ENCODE measurements at regions of chr6 and their contacts with region 1.

Region 1: DNA sequence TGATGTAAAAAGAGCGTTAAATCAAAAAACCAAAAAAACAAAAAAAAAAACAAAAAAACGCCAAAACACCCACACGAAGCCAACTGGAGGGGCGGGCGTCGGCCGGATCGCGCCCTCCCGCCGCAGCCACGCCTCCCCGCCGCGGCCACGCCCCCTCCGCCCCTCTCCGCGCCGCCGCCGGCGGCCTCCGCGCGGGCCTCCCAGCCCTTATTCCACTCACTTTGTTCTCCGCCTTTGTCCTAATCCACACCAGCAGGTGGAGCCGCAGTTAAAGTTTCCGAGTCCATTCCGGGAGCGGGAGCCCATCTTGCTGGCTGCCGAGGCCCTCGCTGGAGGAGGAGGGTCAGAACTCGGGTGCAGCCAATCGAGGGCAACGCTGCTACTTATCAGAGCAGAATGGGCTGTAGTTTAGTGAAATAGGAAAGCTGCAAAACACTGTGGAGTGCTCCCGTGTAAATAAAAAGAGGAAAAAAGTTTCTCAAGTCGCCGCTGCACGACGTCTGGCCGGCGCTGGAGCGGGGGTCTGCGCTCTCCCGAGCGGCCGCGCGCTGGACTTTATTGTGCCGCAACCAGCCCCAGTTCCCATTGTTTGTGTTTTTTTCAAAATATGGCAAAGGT is at the start of gene ASF1A:
- DNase-seq: peak; percentile 97
- H3K4me3 Mint-ChIP-seq: peak within 1 kb of the TSS; percentile 79
- H3K27ac Mint-ChIP-seq: peak within 1 kb of the TSS; percentile 95
- H3K4me1 Mint-ChIP-seq: peaks cover 51% of the 10 kb centered on the region
- H3K27me3 Mint-ChIP-seq: no peaks in the 10 kb centered on the region
- total RNA-seq, gene ASF1A: 55.7 to 59.8 TPM

Region 2: GRCh38 chr6:118651282-118652050 is 242.4 kb before region 1 on chr6 and contains the start of gene CEP85L:
- CTCF ChIA-PET with region 1: interaction called, 3 read pairs
- POLR2A ChIA-PET with region 1: interaction called, 23 read pairs
- DNase-seq: peak; percentile 90
- H3K4me3 Mint-ChIP-seq: peak within 1 kb of the TSS; percentile 82
- H3K27ac Mint-ChIP-seq: peak within 1 kb of the TSS; percentile 75
- H3K4me1 Mint-ChIP-seq: peaks cover 34% of the 10 kb centered on the region
- H3K27me3 Mint-ChIP-seq: no peaks in the 10 kb centered on the region
- total RNA-seq, gene CEP85L: 36.2 to 38.0 TPM

Region 3: DNA sequence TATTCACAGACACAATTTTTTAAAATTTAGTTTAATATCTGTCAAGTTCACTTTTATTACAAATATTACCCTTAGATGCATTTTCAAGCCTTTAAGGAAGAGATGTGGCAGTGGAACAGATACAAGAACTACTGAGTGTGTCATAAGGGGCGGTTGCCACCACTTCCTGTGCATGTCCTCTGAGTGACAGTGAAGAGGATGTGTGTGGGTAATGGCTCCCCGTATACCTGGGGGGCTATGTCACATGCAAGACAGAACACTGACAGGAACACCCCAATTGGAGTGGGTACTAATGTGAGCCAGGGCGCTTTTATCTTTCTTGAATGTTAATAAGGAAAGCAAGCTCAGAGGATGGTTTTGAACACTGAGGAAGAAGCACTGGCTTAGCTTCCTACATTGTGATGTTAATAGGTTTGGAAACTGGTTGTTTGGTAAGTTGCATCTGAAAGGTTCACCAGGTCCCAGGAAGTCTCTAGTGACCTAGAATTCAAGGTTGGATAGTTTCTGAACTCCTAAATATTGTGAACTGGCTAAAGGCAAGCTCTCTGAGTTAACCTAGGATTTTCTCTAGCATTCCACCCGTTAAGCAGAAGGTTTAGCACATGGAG is 83.4 kb before region 1 on chr6:
- CTCF ChIA-PET with region 1: interaction called, 35 read pairs
- POLR2A ChIA-PET with region 1: interaction called, 74 read pairs
- DNase-seq: peak; percentile 83
- H3K4me3 Mint-ChIP-seq: peak overlapping the region; percentile 3
- H3K27ac Mint-ChIP-seq: peak overlapping the region; percentile 84
- H3K4me1 Mint-ChIP-seq: peaks cover 60% of the 10 kb centered on the region
- H3K27me3 Mint-ChIP-seq: no peaks in the 10 kb centered on the region

Region 4: DNA sequence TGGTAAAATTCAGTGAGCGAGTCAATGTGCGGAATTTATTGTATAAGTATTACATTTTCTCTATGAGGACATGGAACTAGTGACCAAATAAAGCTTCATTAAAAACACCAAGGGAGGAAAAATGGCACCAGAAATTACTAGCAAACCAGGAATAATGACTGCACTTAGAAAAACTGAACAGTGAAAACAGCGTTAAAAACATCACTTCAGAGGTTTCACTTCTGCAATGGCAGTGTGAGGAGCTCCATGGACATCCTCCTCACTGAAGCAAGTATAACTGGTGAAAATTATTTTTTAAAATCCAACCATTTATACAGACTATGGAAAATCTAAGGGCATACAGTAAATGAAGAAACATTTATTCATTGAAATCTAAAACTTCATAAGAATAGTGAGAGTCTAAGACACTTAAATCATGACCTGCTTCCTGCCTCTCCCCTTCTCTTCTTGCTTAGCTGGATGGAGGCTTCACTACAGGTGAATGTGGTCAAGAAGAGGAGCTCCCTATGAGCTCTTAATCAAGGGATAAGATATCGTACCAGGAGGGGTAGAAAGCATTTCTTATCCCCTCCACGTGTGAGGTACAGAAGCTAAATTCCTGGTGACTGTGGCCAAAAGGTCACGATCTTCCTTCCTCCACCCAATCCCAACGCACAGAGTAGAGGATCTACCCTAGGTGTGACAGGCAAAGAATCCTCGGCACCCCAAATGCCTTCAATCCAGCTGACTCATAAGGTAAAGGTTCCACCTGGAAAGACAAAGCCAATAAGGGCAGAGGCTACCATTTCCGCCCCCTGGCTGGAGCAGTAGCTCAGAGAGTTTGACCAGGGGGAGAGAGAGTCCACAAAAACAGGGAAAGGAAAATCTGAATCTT is 12.2 kb before region 1 on chr6:
- CTCF ChIA-PET with region 1: interaction called, 12 read pairs
- POLR2A ChIA-PET with region 1: interaction called, 14 read pairs
- DNase-seq: no peak
- H3K4me3 Mint-ChIP-seq: no peak overlapping the region
- H3K27ac Mint-ChIP-seq: no peak overlapping the region
- H3K4me1 Mint-ChIP-seq: peaks cover 35% of the 10 kb centered on the region
- H3K27me3 Mint-ChIP-seq: no peaks in the 10 kb centered on the region

Region 5: GRCh38 chr6:119078376-119079282 is 184.7 kb after region 1 on chr6 and contains the start of gene FAM184A:
- CTCF ChIA-PET with region 1: interaction called, 5 read pairs
- POLR2A ChIA-PET with region 1: interaction called, 15 read pairs
- DNase-seq: peak; percentile 75
- H3K4me3 Mint-ChIP-seq: peak within 1 kb of the TSS; percentile 88
- H3K27ac Mint-ChIP-seq: peak within 1 kb of the TSS; percentile 68
- H3K4me1 Mint-ChIP-seq: peaks cover 34% of the 10 kb centered on the region
- H3K27me3 Mint-ChIP-seq: peaks cover 10% of the 10 kb centered on the region
- total RNA-seq, gene FAM184A: 5.4 to 5.9 TPM